ENCODE measurements at regions of chr1 and their contacts with region 1.

Region 1: GRCh38 chr1:85200870-85201339 is at the start of gene SYDE2:
- DNase-seq: peak; percentile 79
- H3K4me3 Mint-ChIP-seq: peak within 1 kb of the TSS; percentile 93
- H3K27ac Mint-ChIP-seq: peak within 1 kb of the TSS; percentile 76
- H3K4me1 Mint-ChIP-seq: peaks cover 14% of the 10 kb centered on the region
- H3K27me3 Mint-ChIP-seq: no peaks in the 10 kb centered on the region
- CTCF ChIP-seq: no peak
- total RNA-seq, gene SYDE2: 4.3 and 5.9 TPM in 2 replicates

Region 2: DNA sequence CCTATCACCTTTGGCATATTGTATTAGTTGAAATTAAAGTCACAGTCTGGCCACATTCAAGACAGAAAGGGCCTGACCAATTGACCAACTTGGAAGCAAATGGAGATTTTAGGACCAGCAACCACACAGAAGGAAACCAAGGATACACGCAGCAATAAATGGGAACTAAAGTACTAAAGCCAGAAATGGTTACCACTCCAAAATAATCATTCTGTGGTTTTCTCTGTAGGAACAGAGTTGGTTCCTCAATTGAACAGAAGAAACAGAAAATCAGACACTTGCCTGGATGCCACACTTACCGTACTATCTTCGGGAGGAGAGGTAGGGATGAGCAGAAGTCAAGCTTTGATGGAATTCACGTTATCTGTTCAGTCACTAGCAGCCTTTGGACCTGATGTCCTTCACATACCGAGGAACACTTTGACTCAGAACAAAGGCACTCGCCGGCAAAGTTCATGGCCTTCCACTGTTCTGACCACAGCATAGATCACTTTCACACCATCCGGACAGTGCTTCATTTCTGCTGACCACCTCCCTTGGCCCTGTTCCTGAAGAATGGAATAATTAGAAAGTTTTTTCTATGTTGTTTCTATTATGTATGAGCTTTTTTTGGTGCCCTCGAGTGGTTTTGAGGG is 404.8 kb before region 1 on chr1:
- CTCF ChIA-PET with region 1: no interaction called
- POLR2A ChIA-PET with region 1: no interaction called
- intact Hi-C with region 1: no loop called
- DNase-seq: no peak
- H3K4me3 Mint-ChIP-seq: no peak overlapping the region
- H3K27ac Mint-ChIP-seq: no peak overlapping the region
- H3K4me1 Mint-ChIP-seq: peaks cover 5% of the 10 kb centered on the region
- H3K27me3 Mint-ChIP-seq: no peaks in the 10 kb centered on the region
- CTCF ChIP-seq: no peak

Region 3: DNA sequence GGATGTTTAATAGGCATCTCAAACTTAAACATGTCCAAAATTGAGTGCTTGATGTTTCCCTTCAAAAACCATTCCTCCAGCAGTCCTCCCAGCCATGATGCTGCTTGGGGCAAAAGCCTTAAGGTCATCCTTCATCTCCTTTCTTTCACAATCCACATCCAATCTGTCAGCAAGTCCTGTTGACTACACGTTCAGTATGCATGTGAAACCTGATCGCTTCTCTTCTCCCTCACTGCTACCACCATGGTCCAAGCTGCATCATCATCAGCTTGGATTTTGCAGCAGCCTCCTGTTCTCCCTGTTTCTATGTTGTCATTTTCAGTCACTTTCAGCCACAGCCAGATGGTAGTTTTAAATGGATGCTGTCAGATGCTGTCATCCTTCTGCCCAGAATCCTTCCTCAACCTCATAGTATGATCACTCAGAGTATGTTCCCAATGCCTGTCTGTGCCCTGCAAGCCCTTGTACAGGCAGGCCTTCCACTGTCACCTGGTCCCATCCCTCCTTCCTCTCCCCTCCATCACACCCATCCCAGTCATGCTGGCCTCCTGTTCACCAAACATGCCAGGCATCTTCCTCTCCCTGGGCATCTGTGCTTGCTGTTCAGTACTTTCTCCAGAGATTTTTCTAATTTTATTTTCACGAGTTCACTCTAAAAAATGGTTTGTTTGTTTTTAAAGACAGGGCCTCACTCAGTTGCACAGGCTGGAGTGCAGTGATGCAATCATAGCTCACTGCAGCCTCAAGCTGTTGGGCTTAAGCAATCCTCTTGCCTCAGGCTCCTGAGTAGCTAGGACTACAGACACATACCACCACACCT is 66.1 kb before region 1 on chr1:
- CTCF ChIA-PET with region 1: no interaction called
- POLR2A ChIA-PET with region 1: interaction called, 18 read pairs
- intact Hi-C with region 1: no loop called
- DNase-seq: peak; percentile 72
- H3K4me3 Mint-ChIP-seq: no peak overlapping the region
- H3K27ac Mint-ChIP-seq: no peak overlapping the region
- H3K4me1 Mint-ChIP-seq: no peaks in the 10 kb centered on the region
- H3K27me3 Mint-ChIP-seq: no peaks in the 10 kb centered on the region
- CTCF ChIP-seq: no peak

Region 4: DNA sequence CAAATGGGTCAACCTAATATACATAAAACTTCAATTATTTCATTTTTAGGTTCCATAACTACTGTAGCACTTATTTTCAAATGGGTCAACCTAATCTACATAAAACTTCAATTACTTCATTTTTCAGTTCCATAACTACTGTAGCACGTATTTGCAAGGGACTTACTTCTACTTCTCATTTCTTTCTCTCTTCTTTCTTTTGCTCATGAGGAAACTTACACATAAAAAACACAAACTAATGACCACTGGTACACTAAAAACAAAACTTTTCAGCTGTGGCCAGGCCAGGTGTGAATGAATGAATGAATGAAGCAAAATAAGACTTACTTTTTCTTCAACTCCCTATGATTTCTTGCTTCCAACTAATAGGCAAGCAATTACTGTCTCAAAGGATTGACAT is 11.8 kb before region 1 on chr1:
- CTCF ChIA-PET with region 1: no interaction called
- POLR2A ChIA-PET with region 1: interaction called, 16 read pairs
- intact Hi-C with region 1: no loop called
- DNase-seq: no peak
- H3K4me3 Mint-ChIP-seq: no peak overlapping the region
- H3K27ac Mint-ChIP-seq: no peak overlapping the region
- H3K4me1 Mint-ChIP-seq: peaks cover 5% of the 10 kb centered on the region
- H3K27me3 Mint-ChIP-seq: no peaks in the 10 kb centered on the region
- CTCF ChIP-seq: no peak

Region 5: DNA sequence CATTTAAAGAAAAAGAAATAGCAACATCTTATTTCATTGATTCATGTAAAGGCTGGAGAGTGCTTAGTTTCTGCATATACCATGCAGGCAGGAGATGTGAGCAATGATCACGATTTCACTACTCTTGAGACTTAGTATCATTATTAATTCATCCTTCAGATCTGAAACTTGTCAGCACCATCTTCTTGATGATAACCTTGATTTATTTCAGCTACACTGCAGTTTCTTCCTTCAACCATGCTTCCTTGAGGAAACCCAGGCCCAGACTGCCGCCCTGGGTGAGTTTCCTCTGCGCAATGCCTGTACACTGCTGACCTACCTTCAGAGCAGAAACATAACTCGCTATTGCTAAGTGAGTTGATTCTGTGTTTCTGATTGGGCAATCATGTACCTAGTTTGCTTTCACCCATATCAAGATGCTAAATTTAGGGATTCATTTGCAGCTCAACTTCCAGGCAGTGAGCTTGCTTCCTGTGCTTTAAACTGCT is 89.0 kb after region 1 on chr1:
- CTCF ChIA-PET with region 1: no interaction called
- POLR2A ChIA-PET with region 1: no interaction called
- intact Hi-C with region 1: no loop called
- DNase-seq: peak; percentile 48
- H3K4me3 Mint-ChIP-seq: peak overlapping the region; percentile 6
- H3K27ac Mint-ChIP-seq: peak overlapping the region; percentile 69
- H3K4me1 Mint-ChIP-seq: peaks cover 24% of the 10 kb centered on the region
- H3K27me3 Mint-ChIP-seq: no peaks in the 10 kb centered on the region
- CTCF ChIP-seq: no peak

Measured in MCF 10A (cell line).